ENCODE measurements at regions of chr22 and their contacts with region 1.

Region 1: GRCh38 chr22:32474635-32475467 is at the start of gene FBXO7:
- DNase-seq: peak; percentile 78 to 90
- ATAC-seq: peak; percentile 88 to 92
- H3K4me3 ChIP-seq: peak within 1 kb of the TSS; percentile 78 to 98 (median 84)
- H3K27ac ChIP-seq: peak within 1 kb of the TSS; percentile 92 to 99 (median 94)
- H3K4me1 ChIP-seq: peaks cover 25 to 29% of the 10 kb centered on the region in 2 donors
- H3K27me3 ChIP-seq: no peaks in the 10 kb centered on the region
- CTCF ChIP-seq: peak in 4 of 5 experiments; percentile 10 to 61 (median 46)
- POLR2A ChIP-seq: peak; percentile 72 to 75
- total RNA-seq, gene FBXO7: 30.6 to 40.7 (median 31.8) TPM

Region 2: DNA sequence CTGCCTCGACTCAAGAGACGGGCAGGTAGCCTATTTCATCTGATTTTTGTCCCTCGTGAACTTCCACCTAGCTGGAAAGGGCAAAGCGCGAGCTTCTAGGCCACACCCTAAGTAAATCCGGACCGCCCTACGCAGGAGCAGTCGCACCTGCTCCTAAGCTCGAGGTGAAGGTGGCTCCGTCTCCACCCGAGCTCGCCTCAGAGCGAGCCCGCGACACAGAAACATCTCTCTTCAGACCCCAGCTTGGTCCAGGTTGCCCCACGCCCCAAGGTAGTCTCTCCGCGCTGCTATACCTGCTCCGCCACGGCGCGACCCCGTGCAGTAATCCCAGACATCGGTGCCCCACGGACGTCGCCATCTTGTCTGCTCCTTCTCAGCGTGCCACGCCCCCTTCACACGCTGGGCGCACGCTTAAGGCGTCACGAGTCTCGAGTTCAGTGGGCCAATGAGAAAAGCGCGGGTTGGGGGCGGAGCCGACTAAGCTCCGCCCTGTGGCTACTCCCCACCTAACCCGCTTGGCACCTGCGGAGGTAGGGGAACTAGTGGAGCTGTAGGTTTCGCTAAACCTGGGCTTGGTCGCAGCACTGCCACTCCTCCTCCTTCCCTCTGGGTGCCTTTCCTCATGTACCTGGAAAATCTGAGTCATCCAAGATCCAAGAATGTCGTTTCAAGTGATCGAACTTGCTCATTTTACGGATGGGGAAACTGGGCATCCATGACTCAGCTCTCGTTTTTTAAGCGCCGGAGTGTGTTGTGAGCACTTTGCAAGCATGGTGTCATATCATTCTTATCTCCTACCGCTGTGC is 812.8 kb before region 1 on chr22 and contains the start of gene PISD:
- in situ Hi-C with region 1: no loop called
- intact Hi-C with region 1: loop called (anchors 10 kb)
- DNase-seq: peak; percentile 87 to 94
- ATAC-seq: peak; percentile 98
- H3K4me3 ChIP-seq: peak within 1 kb of the TSS; percentile 88 to 96 (median 94)
- H3K27ac ChIP-seq: peak within 1 kb of the TSS; percentile 64 to 85 (median 78)
- H3K4me1 ChIP-seq: peaks cover 16 to 19% of the 10 kb centered on the region in 2 donors
- H3K27me3 ChIP-seq: no peaks in the 10 kb centered on the region
- CTCF ChIP-seq: no peak
- POLR2A ChIP-seq: peak; percentile 69 to 73
- total RNA-seq, gene PISD: 15.3 to 19.0 (median 18.5) TPM

Region 3: GRCh38 chr22:31970490-31971444 is 504.1 kb before region 1 on chr22:
- in situ Hi-C with region 1: loop called in 3 of 4 experiments (anchors 25 kb)
- intact Hi-C with region 1: loop called (anchors 2 kb)
- DNase-seq: peak; percentile 39 to 65
- ATAC-seq: peak; percentile 94
- H3K4me3 ChIP-seq: peak overlapping the region; percentile 41 to 52 (median 46)
- H3K27ac ChIP-seq: no peak overlapping the region
- H3K4me1 ChIP-seq: peaks cover 0 to 11% of the 10 kb centered on the region in 2 donors
- H3K27me3 ChIP-seq: no peaks in the 10 kb centered on the region
- CTCF ChIP-seq: peak; percentile 82 to 96 (median 88)
- POLR2A ChIP-seq: no peak

Region 4: DNA sequence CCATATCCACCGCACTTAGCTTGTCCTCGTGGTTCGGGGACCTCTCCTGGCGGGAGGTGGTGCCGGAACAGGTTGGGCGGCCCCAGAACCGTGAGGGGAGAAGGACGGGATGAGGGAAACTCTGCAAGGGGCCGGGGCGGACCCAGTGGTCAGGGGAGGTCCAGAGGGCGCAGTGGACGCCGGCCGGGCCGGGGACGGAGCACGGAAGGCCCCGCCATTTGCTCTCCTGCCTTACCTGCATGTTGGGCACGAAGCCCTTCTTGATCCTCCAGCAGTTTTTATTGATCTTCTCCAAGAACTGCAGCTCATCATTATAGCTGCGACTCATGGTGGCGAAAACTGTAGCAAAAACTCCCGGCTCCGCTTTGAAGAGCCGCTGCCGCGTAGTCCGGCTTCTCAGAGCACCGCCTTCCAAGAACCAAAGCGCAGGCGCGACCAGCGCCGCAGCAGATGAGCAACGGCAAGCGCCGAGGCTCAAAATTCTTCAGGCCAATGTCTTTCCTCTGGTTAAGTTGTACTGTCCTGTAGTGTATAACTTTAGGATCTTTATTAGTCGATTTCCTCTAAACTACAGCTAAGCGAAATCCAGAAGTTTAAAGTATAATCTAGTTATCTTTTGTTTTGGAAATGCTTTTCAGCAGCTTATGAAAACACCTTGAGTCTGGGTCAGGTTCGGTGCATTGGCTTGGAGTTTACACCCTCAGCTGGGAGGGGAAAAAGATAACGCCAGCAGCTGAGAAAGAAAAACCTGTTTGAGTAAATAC is 62.8 kb before region 1 on chr22 and contains the start of gene RTCB:
- in situ Hi-C with region 1: loop called in 2 of 4 experiments (anchors 5 kb)
- intact Hi-C with region 1: loop called (anchors 1 kb)
- DNase-seq: peak; percentile 74 to 85
- ATAC-seq: peak; percentile 90 to 92
- H3K4me3 ChIP-seq: peak within 1 kb of the TSS; percentile 91 to 96 (median 92)
- H3K27ac ChIP-seq: peak within 1 kb of the TSS; percentile 77 to 85 (median 80)
- H3K4me1 ChIP-seq: peaks cover 11 to 27% of the 10 kb centered on the region in 2 donors
- H3K27me3 ChIP-seq: no peaks in the 10 kb centered on the region
- CTCF ChIP-seq: peak in 1 of 5 experiments; percentile 7
- POLR2A ChIP-seq: peak; percentile 64 to 76
- total RNA-seq, gene RTCB: 53.7 to 76.4 (median 56.6) TPM